ENCODE measurements at regions of chr4 and their contacts with region 1.

Region 1: GRCh38 chr4:104064646-104065577 is 345.1 kb upstream of the TACR3 start:
- DNase-seq: peak; percentile 60 to 74 (median 64)
- ATAC-seq: peak; percentile 83
- H3K4me3 ChIP-seq: no peak overlapping the region
- H3K27ac ChIP-seq: no peak overlapping the region
- H3K4me1 ChIP-seq: no peaks in the 10 kb centered on the region
- H3K27me3 ChIP-seq: no peaks in the 10 kb centered on the region
- CTCF ChIP-seq: peak in 6 of 7 experiments; percentile 50 to 76 (median 65)
- POLR2A ChIP-seq: no peak

Region 2: GRCh38 chr4:104117776-104118175 is 52.9 kb after region 1 on chr4:
- intact Hi-C with region 1: no loop called
- DNase-seq: no peak
- ATAC-seq: no peak
- H3K4me3 ChIP-seq: no peak overlapping the region
- H3K27ac ChIP-seq: no peak overlapping the region
- H3K4me1 ChIP-seq: no peaks in the 10 kb centered on the region
- H3K27me3 ChIP-seq: no peaks in the 10 kb centered on the region
- CTCF ChIP-seq: no peak
- POLR2A ChIP-seq: no peak

Region 3: GRCh38 chr4:104451573-104451972 is 386.7 kb after region 1 on chr4:
- intact Hi-C with region 1: loop called (anchors 10 kb)
- DNase-seq: peak in 3 of 4 donors; percentile 6 to 15 (median 13)
- ATAC-seq: peak; percentile 83
- H3K4me3 ChIP-seq: no peak overlapping the region
- H3K27ac ChIP-seq: no peak overlapping the region
- H3K4me1 ChIP-seq: no peaks in the 10 kb centered on the region
- H3K27me3 ChIP-seq: no peaks in the 10 kb centered on the region
- CTCF ChIP-seq: peak; percentile 14 to 62 (median 53)
- POLR2A ChIP-seq: no peak